GM18951 (cell line): ENCODE measurements at regions of chr1 and their contacts with region 1.

Region 1: DNA sequence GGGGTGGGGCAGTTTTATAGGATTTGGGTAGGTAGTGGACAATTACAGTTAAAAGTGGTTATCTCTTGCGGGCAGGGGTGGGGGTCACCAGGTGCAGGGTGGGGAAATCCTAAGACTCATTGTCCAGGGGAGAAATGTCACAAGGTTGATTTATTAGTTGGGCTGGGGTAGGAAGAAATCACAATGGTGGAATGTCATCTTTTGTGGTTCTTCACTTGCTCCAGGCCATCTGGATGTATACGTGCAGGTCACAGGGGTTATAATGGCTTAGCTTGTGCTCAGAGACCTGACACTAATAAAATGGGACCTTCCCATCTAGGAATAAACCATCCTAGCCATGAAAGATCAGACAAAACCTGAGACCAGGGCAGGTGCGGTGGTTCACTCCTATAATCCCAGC is 11.5 kb downstream of the TEX46 start:
- POLR2A ChIP-seq: no peak

Region 2: DNA sequence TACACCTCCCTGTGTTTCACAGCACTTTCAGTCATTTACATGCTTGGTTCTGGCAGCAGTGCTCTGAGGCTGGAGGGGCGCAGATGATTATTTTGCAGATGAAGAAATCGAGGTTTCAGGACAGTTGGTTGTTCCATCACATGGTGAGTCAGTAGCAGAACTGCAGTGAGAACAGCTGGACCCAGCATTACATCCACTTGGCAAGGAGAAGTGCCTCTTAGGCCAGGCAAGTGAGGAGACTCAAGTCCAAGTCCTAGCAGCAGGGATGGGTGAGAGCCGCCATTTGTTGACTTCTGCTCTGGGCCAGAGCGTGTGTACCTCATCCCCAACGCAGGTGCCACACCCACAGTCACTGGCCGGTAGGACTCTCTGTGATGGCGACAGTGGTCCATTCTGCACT is 467.6 kb before region 1 on chr1:
- in situ Hi-C with region 1: no loop called
- POLR2A ChIP-seq: no peak

Region 3: GRCh38 chr1:22903113-22903512 is 101.0 kb before region 1 on chr1:
- in situ Hi-C with region 1: no loop called
- POLR2A ChIP-seq: no peak

Region 4: GRCh38 chr1:23079025-23079424 is 74.9 kb after region 1 on chr1:
- in situ Hi-C with region 1: loop called (anchors 5 kb)
- POLR2A ChIP-seq: no peak

Region 5: GRCh38 chr1:23149114-23149513 is 145.0 kb after region 1 on chr1:
- in situ Hi-C with region 1: no loop called
- POLR2A ChIP-seq: no peak